HEK293 (cell line): ENCODE measurements at regions of chrX and their contacts with region 1.

Region 1: DNA sequence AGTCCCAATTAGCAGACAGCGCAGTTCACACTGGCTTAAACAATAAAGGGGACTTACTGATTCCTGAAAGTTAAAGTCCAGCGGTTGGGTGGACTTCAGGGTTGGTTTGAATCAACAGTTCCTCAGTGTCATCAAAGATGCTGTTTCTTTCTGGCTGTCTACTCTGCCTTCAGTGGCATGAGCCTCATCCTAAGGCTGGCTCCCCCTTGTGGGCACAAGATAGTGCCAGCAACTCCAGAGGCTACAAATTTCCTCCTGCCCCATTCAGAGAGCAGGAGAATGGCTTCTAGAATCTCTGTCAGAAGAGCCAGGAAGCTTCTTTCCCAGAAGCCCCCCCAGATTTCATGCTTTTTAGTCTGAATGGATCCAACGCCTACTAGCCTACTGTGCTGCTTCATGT is 82.4 kb upstream of the MTM1 start:
- H3K4me3 ChIP-seq: no peak overlapping the region
- H3K27ac ChIP-seq: no peak overlapping the region
- H3K4me1 ChIP-seq: no peaks in the 10 kb centered on the region
- CTCF ChIP-seq: no peak

Region 2: DNA sequence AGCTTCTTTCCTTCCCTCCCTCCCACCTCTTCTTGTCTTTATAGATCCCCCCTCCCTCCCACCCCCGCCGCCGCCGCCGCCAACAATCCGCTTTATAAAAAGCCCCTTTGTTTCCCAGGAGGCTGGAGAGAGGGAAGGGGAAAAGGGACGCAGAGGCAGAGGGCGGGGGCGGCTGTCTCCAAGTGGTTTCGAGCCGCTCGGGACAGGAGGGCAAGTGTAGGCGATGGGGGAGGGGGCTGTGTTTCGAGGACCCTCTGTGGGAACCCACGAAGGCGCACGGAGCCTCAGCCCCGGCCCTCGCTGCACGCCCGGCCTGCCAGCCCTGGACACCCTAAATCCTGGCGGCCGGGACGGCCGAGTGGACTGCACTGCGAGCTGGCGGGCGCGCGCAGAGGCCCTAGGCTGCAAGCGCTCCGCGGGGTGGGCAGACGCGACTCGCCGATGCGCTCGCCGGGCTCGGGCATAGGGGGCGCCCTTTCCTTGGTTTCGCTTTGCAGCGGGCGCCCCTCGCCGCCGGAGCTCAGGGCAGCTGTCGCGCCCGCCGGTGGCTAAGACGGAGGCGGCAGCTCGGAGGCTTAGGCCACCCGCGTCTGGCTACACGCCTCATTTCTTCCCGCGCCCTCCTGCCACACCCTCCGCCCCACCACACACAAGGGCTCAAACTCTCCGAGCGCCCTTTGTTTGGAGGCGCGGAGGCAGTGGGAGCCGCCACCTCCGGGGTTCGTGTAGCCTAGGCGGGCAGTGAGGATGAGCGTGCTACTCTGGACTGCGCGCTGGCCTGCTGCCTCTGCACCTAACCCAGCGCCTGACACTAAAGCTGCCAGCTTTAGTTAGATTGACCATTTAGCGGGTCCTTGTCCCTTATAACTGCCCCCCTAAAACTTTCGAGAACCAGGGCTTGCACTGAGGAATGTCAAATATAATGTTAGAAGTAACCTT is 120.7 kb before region 1 on chrX:
- CTCF ChIA-PET with region 1: interaction called, 14 read pairs
- POLR2A ChIA-PET with region 1: no interaction called
- H3K4me3 ChIP-seq: peak overlapping the region; percentile 59
- H3K27ac ChIP-seq: peak overlapping the region; percentile 67
- H3K4me1 ChIP-seq: peaks cover 3% of the 10 kb centered on the region; the same call in 1 of the 2 replicates
- CTCF ChIP-seq: peak; percentile 92

Region 3: GRCh38 chrX:150879855-150880808 is 394.1 kb after region 1 on chrX:
- CTCF ChIA-PET with region 1: no interaction called
- POLR2A ChIA-PET with region 1: no interaction called
- H3K4me3 ChIP-seq: no peak overlapping the region
- H3K27ac ChIP-seq: no peak overlapping the region
- H3K4me1 ChIP-seq: no peaks in the 10 kb centered on the region
- CTCF ChIP-seq: no peak

Region 4: GRCh38 chrX:150898343-150899190 is 412.6 kb after region 1 on chrX and contains the start of gene CD99L2:
- CTCF ChIA-PET with region 1: no interaction called
- POLR2A ChIA-PET with region 1: no interaction called
- H3K4me3 ChIP-seq: peak within 1 kb of the TSS; percentile 62
- H3K27ac ChIP-seq: peak within 1 kb of the TSS; percentile 72
- H3K4me1 ChIP-seq: peaks cover 6% of the 10 kb centered on the region; the same call in 1 of the 2 replicates
- CTCF ChIP-seq: no peak